Astrocyte of the cerebellum (primary cell): ENCODE measurements at regions of chr1 and their contacts with region 1.

Region 1: GRCh38 chr1:154558575-154559465 is at the start of gene UBE2Q1:
- DNase-seq: peak; percentile 96
- H3K4me3 ChIP-seq: peak within 1 kb of the TSS; percentile 90
- CTCF ChIP-seq: no peak

Region 2: DNA sequence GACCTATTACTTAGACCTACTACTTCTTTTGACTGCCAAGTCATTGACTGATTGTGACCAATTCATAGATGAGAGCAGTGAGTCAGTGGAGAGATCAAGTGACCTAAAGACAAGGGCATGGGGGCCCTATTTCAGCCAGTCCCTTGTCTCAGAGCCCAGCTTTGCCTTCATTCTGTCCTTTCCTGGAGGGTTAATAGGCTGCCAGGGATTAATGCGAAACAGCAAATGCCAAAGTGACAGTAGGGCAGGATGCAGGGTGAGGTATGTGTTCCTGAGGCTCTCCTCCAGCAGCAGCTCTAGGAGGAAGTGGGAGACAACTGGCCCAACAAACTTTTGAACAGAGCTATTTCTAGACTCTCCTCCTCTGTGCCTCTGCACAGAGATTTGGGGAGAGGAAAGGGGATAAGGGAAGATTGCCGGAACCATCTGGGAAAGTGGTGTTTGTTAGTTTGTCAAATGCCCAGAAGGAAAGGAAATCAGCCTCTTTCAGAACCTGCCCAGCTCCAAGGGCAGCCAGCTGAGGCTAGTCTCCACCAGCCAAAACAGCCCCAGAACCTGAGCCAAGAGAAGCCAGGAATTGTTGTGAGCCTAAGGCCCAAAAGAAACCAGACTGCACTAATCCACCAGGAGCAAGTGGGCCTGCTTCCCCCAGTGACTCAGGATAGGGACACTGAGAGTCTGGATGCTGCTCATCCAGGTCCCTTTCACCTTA is 1004.8 kb before region 1 on chr1:
- in situ Hi-C with region 1: no loop called
- DNase-seq: no peak
- H3K4me3 ChIP-seq: no peak overlapping the region
- CTCF ChIP-seq: no peak

Region 3: DNA sequence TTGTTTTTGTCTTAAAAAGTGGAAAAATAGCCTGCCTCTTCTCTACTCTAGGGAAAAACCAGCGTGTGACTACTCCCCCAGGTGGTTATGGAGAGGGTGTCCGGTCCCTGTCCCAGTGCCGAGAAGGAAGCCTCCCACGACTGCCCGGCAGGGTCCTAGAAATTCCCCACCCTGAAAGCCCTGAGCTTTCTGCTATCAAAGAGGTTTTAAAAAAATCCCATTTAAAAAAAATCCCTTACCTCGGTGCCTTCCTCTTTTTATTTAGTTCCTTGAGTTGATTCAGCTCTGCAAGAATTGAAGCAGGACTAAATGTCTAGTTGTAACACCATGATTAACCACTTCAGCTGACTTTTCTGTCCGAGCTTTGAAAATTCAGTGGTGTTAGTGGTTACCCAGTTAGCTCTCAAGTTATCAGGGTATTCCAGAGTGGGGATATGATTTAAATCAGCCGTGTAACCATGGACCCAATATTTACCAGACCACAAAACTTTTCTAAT is 91.9 kb before region 1 on chr1:
- in situ Hi-C with region 1: no loop called
- DNase-seq: no peak
- H3K4me3 ChIP-seq: no peak overlapping the region
- CTCF ChIP-seq: no peak

Region 4: GRCh38 chr1:154479764-154480421 is 78.9 kb before region 1 on chr1:
- in situ Hi-C with region 1: loop called (anchors 5 kb)
- DNase-seq: peak; percentile 74
- H3K4me3 ChIP-seq: no peak overlapping the region
- CTCF ChIP-seq: peak; percentile 92

Region 5: DNA sequence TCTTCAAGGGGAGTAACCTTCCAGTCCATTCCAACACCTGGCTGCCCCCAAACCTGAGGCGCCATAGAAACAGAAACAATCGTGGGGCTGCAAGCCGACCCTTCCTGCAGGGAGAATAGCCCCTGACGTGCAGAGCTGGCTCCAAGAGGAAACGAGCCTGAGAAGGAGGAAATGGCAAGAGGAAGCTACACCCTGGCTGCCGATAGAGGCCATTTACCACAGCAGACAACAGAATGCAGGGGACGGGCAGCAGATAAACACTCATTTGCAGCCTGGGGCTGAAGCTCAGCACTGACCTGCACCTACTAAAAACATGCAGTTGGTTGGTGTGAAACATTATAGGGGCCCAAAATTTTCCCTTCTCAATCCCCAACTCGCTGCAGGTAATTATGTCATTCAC is 65.5 kb before region 1 on chr1:
- in situ Hi-C with region 1: no loop called
- DNase-seq: no peak
- H3K4me3 ChIP-seq: no peak overlapping the region
- CTCF ChIP-seq: no peak

Region 6: GRCh38 chr1:154520333-154520732 is 38.5 kb before region 1 on chr1:
- in situ Hi-C with region 1: loop called (anchors 5 kb)
- DNase-seq: no peak
- H3K4me3 ChIP-seq: no peak overlapping the region
- CTCF ChIP-seq: no peak

Region 7: DNA sequence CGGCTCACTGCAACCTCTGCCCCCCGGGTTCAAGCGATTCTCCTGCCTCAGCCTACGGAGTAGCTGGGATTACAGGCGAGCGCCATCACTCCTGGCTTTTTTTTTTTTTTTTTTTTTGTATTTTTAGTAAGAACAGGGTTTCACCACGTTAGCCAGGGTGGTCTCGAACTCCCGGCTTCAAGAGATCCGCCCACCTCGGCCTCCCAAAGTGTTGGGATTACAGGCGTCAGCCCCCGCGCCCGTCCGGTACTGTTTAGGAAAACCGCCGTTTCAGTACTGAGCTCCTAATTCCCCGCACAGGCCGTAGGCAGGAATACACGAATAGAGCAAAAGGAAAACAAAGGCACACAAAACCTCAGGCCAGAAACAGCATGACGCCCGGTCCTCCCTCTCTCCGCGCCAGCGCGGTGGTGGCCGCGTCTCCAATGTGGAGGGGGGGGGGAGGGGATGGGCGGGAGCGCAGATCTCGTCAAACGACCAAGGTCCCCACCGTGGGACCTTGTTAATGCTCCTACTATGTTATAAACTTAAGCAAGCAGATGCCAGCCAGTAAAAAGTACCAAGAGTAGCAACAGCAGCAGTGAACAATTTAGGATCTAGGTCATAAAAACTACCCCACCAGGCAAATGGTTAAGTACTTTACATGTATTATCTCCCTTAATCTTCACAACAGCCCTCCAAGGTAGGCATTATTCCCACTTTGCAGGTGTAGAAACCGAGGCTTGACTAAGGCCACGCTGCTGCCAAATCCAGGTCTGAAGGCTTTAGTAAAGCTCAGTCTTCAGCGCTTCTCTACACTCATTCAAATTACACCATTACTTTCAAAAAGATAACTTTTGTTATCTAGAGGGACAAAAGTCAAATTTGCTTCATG is 49.8 kb after region 1 on chr1:
- in situ Hi-C with region 1: no loop called
- DNase-seq: peak; percentile 39
- H3K4me3 ChIP-seq: peak overlapping the region; percentile 71
- CTCF ChIP-seq: no peak